H1 (cell line): ENCODE measurements at regions of chr12 and their contacts with region 1.

Region 1: GRCh38 chr12:98698603-98699463 is 53.7 kb downstream of the APAF1 start:
- DNase-seq: peak in 1 of 2 experiments; percentile 54
- H3K4me3 ChIP-seq: no peak overlapping the region
- H3K27ac ChIP-seq: no peak overlapping the region
- H3K4me1 ChIP-seq: peaks cover 2 to 11% (median 5%) of the 10 kb centered on the region in 4 experiments; a peak in 3 of 7 replicates
- H3K27me3 ChIP-seq: no peaks in the 10 kb centered on the region
- CTCF ChIP-seq: peak; percentile 66 to 85 (median 76)
- EP300 ChIP-seq: no peak
- POLR2A ChIP-seq: no peak
- RAD21 ChIP-seq: peak; percentile 82

Region 2: GRCh38 chr12:98606357-98606988 is 92.4 kb before region 1 on chr12:
- CTCF ChIA-PET with region 1: no interaction called
- POLR2A ChIA-PET with region 1: no interaction called
- DNase-seq: no peak
- H3K4me3 ChIP-seq: no peak overlapping the region
- H3K27ac ChIP-seq: no peak overlapping the region
- H3K4me1 ChIP-seq: no peaks in the 10 kb centered on the region
- H3K27me3 ChIP-seq: no peaks in the 10 kb centered on the region
- CTCF ChIP-seq: no peak
- EP300 ChIP-seq: no peak
- POLR2A ChIP-seq: no peak
- RAD21 ChIP-seq: no peak

Region 3: GRCh38 chr12:98669751-98670150 is 29.1 kb before region 1 on chr12:
- CTCF ChIA-PET with region 1: no interaction called
- POLR2A ChIA-PET with region 1: no interaction called
- DNase-seq: no peak
- H3K4me3 ChIP-seq: no peak overlapping the region
- H3K27ac ChIP-seq: no peak overlapping the region
- H3K4me1 ChIP-seq: no peaks in the 10 kb centered on the region
- H3K27me3 ChIP-seq: no peaks in the 10 kb centered on the region
- CTCF ChIP-seq: no peak
- EP300 ChIP-seq: no peak
- POLR2A ChIP-seq: no peak
- RAD21 ChIP-seq: no peak

Region 4: GRCh38 chr12:98714426-98714825 is 15.6 kb after region 1 on chr12:
- CTCF ChIA-PET with region 1: interaction called, 14 read pairs
- POLR2A ChIA-PET with region 1: interaction called, 4 read pairs
- DNase-seq: no peak
- H3K4me3 ChIP-seq: no peak overlapping the region
- H3K27ac ChIP-seq: no peak overlapping the region
- H3K4me1 ChIP-seq: no peaks in the 10 kb centered on the region
- H3K27me3 ChIP-seq: no peaks in the 10 kb centered on the region
- CTCF ChIP-seq: no peak
- EP300 ChIP-seq: no peak
- POLR2A ChIP-seq: no peak
- RAD21 ChIP-seq: no peak